Dorsolateral prefrontal cortex (tissue), 120 donors: ENCODE measurements at regions of chr5 and their contacts with region 1.

Region 1: GRCh38 chr5:135565725-135566421 is 12.9 kb downstream of the CXCL14 start:
- DNase-seq: peak in 8 of 10 donors; percentile 39 to 77 (median 68)
- H3K4me3 ChIP-seq: no peak overlapping the region
- H3K27ac ChIP-seq: no peak overlapping the region
- H3K27me3 ChIP-seq: peaks cover 0 to 4% (median 0%) of the 10 kb centered on the region in 45 donors
- CTCF ChIP-seq: peak; percentile 50 to 88 (median 77)

Region 2: DNA sequence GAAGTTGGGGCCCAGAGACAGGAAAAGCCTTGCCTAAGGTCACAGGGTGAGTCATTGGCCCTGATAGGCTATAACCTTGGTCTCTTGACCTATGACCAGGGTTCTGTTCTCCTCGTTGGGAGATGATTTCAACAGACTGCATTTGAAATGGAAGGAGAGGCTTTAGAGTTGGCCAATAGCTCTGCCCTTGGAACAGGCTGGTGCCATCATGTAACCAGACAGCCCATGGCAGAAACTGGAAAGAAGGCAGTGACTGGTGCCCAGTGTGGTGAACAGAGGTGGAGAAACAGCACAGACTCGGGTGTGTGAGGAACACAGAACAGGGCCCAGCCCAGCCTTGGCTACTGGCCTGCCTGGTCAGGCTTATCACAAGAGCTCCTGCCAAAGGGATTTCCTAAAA is 158.7 kb after region 1 on chr5:
- intact Hi-C with region 1: loop called in 1 of 2 experiments (anchors 5 kb)
- DNase-seq: no peak
- H3K4me3 ChIP-seq: no peak overlapping the region
- H3K27ac ChIP-seq: no peak overlapping the region
- H3K27me3 ChIP-seq: peaks cover 0 to 4% (median 0%) of the 10 kb centered on the region in 45 donors
- CTCF ChIP-seq: no peak